ENCODE measurements at regions of chr4 and their contacts with region 1.

Region 1: DNA sequence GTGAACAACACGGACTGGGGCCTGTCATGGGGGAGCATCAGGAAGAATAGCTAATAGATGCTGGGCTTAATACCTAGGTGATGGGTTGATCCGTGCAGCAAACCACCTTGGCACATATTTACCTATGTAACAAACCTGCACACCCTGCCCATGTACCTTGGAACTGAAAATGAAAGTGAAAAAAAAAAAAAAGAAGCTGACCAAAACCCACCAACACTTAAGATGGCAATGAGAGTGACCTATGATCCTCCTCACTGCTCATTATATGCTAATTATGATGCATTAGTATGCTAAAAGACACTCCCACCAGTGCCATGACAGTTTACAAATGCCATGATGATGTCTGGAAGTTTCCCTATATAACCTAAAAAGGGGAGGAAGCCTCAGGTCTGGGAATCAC is 503.2 kb upstream of the CTSO start:
- DNase-seq: no peak
- ATAC-seq: no peak
- H3K4me3 ChIP-seq: no peak overlapping the region
- H3K27ac ChIP-seq: no peak overlapping the region
- H3K4me1 ChIP-seq: no peaks in the 10 kb centered on the region
- H3K27me3 ChIP-seq: no peaks in the 10 kb centered on the region
- CTCF ChIP-seq: no peak

Region 2: DNA sequence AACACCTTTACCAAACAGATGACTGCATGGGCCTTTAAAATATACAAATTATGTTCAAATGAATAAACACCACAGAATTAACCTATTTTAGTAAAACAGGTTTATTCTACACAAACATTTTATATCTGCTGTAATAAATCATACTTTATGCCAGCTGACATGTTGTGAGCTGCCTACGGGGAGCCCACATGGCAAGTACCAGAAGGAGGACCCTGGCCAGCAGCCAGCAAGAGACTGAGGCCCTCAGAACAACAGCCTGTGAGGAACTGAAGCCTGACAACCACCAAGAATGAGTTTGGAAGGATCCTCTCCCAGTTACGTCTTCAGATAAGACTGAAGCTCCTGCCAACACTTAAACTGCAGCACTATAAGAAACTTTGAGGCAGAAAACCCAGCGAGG is 137.8 kb after region 1 on chr4:
- intact Hi-C with region 1: no loop called
- DNase-seq: peak; percentile 34 to 47
- ATAC-seq: no peak
- H3K4me3 ChIP-seq: no peak overlapping the region
- H3K27ac ChIP-seq: no peak overlapping the region
- H3K4me1 ChIP-seq: peaks cover 3% of the 10 kb centered on the region
- H3K27me3 ChIP-seq: no peaks in the 10 kb centered on the region
- CTCF ChIP-seq: no peak

Region 3: GRCh38 chr4:157291071-157291470 is 834.2 kb after region 1 on chr4:
- intact Hi-C with region 1: loop called in 1 of 2 experiments (anchors 5 kb)
- DNase-seq: no peak
- ATAC-seq: no peak
- H3K4me3 ChIP-seq: no peak overlapping the region
- H3K27ac ChIP-seq: no peak overlapping the region
- H3K4me1 ChIP-seq: peaks cover 10% of the 10 kb centered on the region
- H3K27me3 ChIP-seq: no peaks in the 10 kb centered on the region
- CTCF ChIP-seq: no peak

Measured in psoas muscle (tissue), 8 donors.